Cardiac septum (tissue), 1 donor: ENCODE measurements at regions of chr11 and their contacts with region 1.

Region 1: DNA sequence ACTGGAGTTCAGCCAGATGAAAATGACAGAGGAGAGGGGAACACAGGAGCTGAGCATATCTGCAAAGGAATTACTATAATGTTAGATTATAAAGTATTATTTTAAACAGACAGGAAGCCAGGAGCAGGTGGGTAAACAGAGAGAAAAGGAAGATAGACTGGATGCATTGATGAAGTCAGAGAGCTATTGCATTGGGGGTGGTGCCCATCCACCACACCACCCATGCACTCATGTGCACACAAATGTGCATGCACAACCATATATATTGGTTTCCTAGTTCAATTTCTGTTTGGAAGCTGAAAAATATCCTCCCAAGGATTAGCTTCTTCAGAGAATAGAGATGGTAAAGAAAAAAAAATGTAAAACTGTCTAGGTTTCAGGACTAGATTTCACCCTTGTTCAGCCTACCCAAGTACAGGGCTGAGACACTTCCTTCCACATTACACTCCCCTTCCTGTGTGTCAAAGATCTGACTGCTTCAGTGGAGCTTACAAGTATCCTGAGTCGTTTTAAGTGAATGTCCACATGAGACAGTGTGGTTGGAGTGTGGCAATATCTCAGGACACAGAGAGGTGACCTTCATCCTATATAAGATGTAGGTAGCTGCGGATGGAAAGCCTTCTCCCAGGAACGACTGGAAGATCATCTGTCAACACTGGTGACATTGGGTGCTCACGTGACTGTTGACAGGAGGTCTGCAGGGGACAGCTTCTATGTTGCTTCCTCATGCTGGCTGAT is 12.2 kb upstream of the SMPD1 start:
- DNase-seq: no peak

Region 2: GRCh38 chr11:6443269-6444003 is 65.4 kb after region 1 on chr11:
- intact Hi-C with region 1: loop called (anchors 2 kb)
- DNase-seq: no peak

Region 3: DNA sequence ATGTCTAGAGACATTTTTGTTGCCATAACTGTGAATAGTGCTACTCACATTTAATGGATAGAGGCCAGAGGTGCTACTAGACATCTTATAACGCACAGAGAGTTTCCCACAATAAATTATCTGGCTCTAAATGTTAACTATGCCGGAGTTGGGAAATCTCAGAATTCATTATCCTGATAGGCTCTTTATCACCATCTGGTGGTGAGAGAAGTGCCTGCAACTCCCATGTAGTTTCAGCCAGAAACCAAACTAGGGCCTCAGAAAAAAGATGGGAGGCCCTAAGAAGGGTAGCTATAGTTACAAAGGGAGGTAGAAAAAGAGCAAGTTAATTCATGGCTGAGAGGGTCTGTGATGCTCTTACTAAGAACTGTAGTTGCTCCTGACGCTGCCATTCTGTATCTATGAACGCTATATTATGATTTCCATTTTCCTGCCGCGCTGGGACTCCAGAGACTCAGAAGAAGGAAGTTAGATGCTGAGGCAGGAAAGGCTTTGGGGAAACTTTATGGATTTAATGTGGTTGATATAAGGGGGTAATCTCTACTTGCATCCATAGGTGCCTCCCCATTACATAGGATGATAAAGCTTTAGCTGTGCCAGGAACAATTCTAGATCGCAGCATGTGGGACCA is 327.9 kb after region 1 on chr11:
- intact Hi-C with region 1: loop called (anchors 10 kb)
- DNase-seq: no peak